ENCODE measurements at regions of chr14 and their contacts with region 1.

Region 1: GRCh38 chr14:74881431-74882361 is at the start of gene DLST:
- DNase-seq: peak; percentile 88
- ATAC-seq: peak; percentile 84
- H3K4me3 ChIP-seq: peak within 1 kb of the TSS; percentile 94
- H3K27ac ChIP-seq: peak within 1 kb of the TSS; percentile 46
- H3K4me1 ChIP-seq: peaks cover 27% of the 10 kb centered on the region
- H3K27me3 ChIP-seq: no peaks in the 10 kb centered on the region
- CTCF ChIP-seq: no peak
- total RNA-seq, gene DLST: 56.9 and 61.1 TPM in 2 replicates

Region 2: GRCh38 chr14:74860906-74861733 is 20.6 kb before region 1 on chr14:
- CTCF ChIA-PET with region 1: interaction called, 35 read pairs
- POLR2A ChIA-PET with region 1: no interaction called
- intact Hi-C with region 1: loop called (anchors 2 kb)
- DNase-seq: peak; percentile 92
- ATAC-seq: peak; percentile 80
- H3K4me3 ChIP-seq: no peak overlapping the region
- H3K27ac ChIP-seq: no peak overlapping the region
- H3K4me1 ChIP-seq: no peaks in the 10 kb centered on the region
- H3K27me3 ChIP-seq: no peaks in the 10 kb centered on the region
- CTCF ChIP-seq: peak; percentile 90

Region 3: DNA sequence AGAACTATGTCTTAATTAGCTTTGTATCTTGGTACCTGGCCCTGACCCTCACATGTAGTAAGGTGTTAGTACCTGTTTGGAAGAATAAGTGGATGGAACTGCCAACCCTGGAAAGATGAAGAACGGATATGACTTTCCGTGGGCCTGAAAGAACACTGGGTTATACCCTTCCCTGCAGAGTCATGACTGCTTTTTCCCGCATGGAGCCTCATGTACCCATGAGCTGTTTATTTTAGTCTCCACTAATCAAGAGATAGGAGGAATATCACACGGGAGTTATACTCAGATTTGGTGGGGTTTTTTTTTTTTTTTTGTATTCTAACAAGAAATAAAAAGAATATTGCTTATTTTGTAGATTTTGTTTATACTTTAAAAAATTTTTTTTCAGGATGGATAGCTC is 15.9 kb after region 1 on chr14:
- CTCF ChIA-PET with region 1: interaction called, 5 read pairs
- POLR2A ChIA-PET with region 1: interaction called, 10 read pairs
- intact Hi-C with region 1: no loop called
- DNase-seq: no peak
- ATAC-seq: no peak
- H3K4me3 ChIP-seq: no peak overlapping the region
- H3K27ac ChIP-seq: no peak overlapping the region
- H3K4me1 ChIP-seq: no peaks in the 10 kb centered on the region
- H3K27me3 ChIP-seq: no peaks in the 10 kb centered on the region
- CTCF ChIP-seq: no peak

Region 4: GRCh38 chr14:74913986-74914573 is 32.4 kb after region 1 on chr14:
- CTCF ChIA-PET with region 1: no interaction called
- POLR2A ChIA-PET with region 1: interaction called, 13 read pairs
- intact Hi-C with region 1: no loop called
- DNase-seq: peak; percentile 74
- ATAC-seq: peak; percentile 97
- H3K4me3 ChIP-seq: no peak overlapping the region
- H3K27ac ChIP-seq: no peak overlapping the region
- H3K4me1 ChIP-seq: no peaks in the 10 kb centered on the region
- H3K27me3 ChIP-seq: no peaks in the 10 kb centered on the region
- CTCF ChIP-seq: peak; percentile 91

Measured in PC-3 (cell line).